HEK293 (cell line): ENCODE measurements at regions of chr3 and their contacts with region 1.

Region 1: DNA sequence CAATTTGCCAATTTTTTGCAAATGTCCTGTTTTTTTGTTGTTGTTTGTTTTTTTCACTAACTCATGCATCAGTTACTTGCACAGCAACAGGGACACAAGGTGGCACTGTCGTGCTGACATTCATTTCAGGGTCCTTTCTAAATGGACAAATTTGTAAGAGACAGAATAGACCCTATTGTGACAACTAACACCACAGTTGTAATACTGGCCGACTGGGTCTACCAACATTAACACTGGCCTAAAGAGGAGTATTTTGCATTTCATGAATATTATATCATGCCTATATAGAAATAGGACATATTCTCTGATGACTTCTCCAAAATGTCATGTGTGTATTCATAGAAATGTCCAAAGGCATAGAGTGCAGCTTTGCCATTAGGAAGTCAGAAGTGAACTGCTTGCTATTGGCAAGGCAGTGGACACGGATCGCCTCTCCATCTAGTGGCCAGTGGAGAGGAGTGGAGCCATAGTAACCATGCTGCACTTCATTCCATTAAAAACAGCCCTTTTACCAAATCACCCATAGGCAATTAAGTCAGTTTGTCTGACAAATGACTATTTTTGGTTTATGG is 54.8 kb downstream of the ZBTB20 start:
- H3K4me3 ChIP-seq: no peak overlapping the region
- H3K27ac ChIP-seq: no peak overlapping the region
- H3K4me1 ChIP-seq: no peaks in the 10 kb centered on the region
- CTCF ChIP-seq: 0 out of 2 replicates have a peak, but pooled peaks have one; percentile 10

Region 2: GRCh38 chr3:115814778-115815380 is 722.6 kb after region 1 on chr3:
- CTCF ChIA-PET with region 1: interaction called, 10 read pairs
- POLR2A ChIA-PET with region 1: no interaction called
- H3K4me3 ChIP-seq: no peak overlapping the region
- H3K27ac ChIP-seq: no peak overlapping the region
- H3K4me1 ChIP-seq: no peaks in the 10 kb centered on the region
- CTCF ChIP-seq: no peak